Right cardiac atrium (tissue), 5 donors: ENCODE measurements at regions of chr1 and their contacts with region 1.

Region 1: DNA sequence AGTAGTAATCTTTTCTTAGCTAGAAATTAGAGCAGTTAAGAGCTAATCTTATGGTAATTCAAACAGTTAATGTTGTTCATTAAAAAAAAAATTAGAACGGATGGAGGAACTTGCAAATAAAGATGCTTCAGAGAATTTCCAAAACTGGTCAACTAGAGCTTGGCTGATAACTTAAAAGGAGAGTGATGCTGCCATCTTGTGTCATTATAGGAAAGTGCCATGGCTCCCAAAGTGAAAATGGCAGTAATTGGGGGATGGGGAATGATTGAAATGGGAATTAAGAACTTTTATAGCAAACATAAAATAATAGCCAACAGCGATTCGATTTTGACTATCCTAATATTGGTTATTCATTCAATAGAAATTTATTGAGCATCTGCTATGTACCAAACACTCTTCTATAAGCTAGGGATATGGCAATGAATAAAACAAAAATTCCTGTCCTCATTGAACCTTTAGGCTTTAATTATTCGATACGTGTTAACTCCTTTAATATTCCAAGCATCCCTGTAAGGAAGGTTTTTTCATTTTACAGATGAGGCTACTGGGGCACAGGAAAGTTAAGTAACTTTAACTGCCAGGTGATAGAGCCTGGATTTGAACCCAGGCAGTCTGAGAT is 5.7 kb upstream of the PLPP3 start:
- DNase-seq: no peak
- ATAC-seq: peak; percentile 54 to 67
- H3K4me3 ChIP-seq: no peak overlapping the region
- H3K27ac ChIP-seq: no peak overlapping the region
- H3K4me1 ChIP-seq: no peaks in the 10 kb centered on the region
- H3K27me3 ChIP-seq: no peaks in the 10 kb centered on the region

Region 2: GRCh38 chr1:55375617-55376258 is 1209.3 kb before region 1 on chr1:
- intact Hi-C with region 1: loop called (anchors 2 to 10 kb)
- DNase-seq: peak in 1 of 3 donors; percentile 58
- ATAC-seq: peak in 1 of 2 donors; percentile 59
- H3K4me3 ChIP-seq: no peak overlapping the region
- H3K27ac ChIP-seq: no peak overlapping the region
- H3K4me1 ChIP-seq: peaks cover 3% of the 10 kb centered on the region
- H3K27me3 ChIP-seq: no peaks in the 10 kb centered on the region